Heart left ventricle (tissue), 16 donors: ENCODE measurements at regions of chr1 and their contacts with region 1.

Region 1: DNA sequence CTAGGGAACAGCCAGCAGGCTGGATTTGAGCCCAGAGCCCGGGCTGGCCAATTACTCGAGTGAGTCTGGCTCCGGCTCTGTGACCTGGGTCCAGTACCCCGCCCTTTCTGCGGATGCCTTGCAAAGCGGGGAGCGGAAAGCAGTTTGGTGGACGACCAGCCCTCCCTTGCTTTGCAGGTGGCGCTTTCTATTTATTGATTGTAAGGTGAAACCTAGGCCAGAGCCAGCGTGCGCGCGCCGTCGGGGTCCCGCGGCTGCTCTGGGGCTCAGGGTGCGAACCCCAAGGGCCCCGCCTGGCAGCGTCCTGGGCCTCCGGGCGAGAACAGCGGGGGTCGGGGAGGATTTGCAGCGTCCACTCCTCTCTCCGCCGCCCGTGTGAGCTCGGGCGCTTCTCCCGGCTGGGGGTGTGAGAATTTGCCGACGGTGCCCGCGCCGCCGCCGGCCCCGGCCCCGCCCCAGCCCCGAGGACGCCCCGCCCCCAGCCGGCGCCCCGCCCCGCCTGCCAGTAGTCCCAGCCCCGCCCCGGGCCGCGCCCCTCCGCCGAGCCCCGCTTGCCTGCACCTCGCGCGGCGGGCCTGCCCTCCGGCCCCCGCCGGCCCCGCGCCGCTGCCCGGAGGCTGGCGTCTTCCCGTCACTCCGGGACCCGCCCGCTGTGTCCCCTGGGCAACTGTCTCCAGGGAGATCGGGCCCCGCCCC is 37.6 kb downstream of the PIK3CD start:
- DNase-seq: peak; percentile 83 to 92 (median 86)
- ATAC-seq: peak; percentile 70 to 94 (median 88)
- H3K4me3 ChIP-seq: peak overlapping the region; percentile 55 to 92 (median 72)
- H3K27ac ChIP-seq: peak overlapping the region in 7 of 12 donors; percentile 22 to 68 (median 50)
- H3K4me1 ChIP-seq: peaks cover 0 to 62% (median 26%) of the 10 kb centered on the region in 12 donors
- H3K27me3 ChIP-seq: no peaks in the 10 kb centered on the region
- CTCF ChIP-seq: no peak
- POLR2A ChIP-seq: no peak

Region 2: GRCh38 chr1:9629445-9630201 is 59.5 kb before region 1 on chr1:
- intact Hi-C with region 1: loop called in 1 of 10 experiments (anchors 5 kb)
- DNase-seq: peak; percentile 58 to 87 (median 69)
- ATAC-seq: peak; percentile 42 to 71 (median 54)
- H3K4me3 ChIP-seq: peak overlapping the region in 2 of 12 donors; percentile 26 to 54
- H3K27ac ChIP-seq: peak overlapping the region in 2 of 12 donors; percentile 13 to 85
- H3K4me1 ChIP-seq: peaks cover 0 to 62% (median 0%) of the 10 kb centered on the region in 12 donors
- H3K27me3 ChIP-seq: peaks cover 0 to 17% (median 0%) of the 10 kb centered on the region in 9 donors
- CTCF ChIP-seq: no peak
- POLR2A ChIP-seq: no peak

Region 3: DNA sequence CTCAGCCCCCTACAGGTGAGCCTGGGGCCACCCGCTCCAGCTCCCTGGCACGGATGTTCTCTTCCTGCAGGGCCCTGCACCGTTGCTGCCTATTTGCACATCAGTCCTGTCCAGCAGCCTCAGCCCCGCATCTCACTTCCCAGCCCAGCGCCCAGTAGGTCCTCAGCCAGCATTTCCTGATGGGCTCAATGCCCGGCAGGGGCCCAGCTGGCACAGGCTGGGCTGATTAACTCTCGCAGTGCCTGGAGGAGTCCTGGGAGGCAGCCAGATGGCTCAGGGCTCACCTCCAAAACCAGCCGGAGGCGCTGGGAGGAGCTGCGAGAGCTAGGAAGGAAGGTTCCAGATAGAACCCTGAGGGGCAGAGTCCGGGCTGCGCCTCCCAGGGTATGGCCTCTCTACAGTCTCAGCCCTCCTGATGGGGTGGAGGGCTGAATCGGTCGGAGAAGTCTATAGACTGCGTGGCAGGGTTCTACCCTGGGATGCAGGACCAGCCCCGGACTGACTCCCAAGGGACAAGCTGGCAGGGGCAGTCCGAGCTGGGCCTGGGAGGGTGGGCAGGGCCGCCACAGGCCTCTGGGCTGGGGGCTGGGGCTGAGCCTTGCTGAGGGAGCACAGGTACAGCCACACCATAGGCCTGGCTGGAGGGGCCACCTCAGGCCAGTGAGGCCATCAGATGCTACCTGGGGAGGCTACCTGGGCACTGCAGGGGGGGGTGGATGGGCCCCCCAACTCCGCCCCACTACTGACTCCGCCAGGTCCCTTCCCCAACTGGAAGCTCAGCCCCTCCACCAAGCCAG is 153.8 kb after region 1 on chr1:
- intact Hi-C with region 1: no loop called
- DNase-seq: no peak
- ATAC-seq: peak; percentile 11 to 40 (median 31)
- H3K4me3 ChIP-seq: no peak overlapping the region
- H3K27ac ChIP-seq: peak overlapping the region in 7 of 12 donors; percentile 16 to 57 (median 42)
- H3K4me1 ChIP-seq: peaks cover 9 to 43% (median 26%) of the 10 kb centered on the region in 12 donors
- H3K27me3 ChIP-seq: no peaks in the 10 kb centered on the region
- CTCF ChIP-seq: no peak
- POLR2A ChIP-seq: no peak